ENCODE measurements at regions of chr6 and their contacts with region 1.

Region 1: GRCh38 chr6:128807577-128807976 is 75.4 kb upstream of the LAMA2 start:
- DNase-seq: no peak
- H3K4me3 ChIP-seq: no peak overlapping the region
- H3K27ac ChIP-seq: no peak overlapping the region
- H3K4me1 ChIP-seq: peaks cover 11% of the 10 kb centered on the region
- H3K27me3 ChIP-seq: no peaks in the 10 kb centered on the region
- CTCF ChIP-seq: peak; percentile 62

Region 2: GRCh38 chr6:129251669-129252376 is 444.2 kb after region 1 on chr6:
- intact Hi-C with region 1: loop called (anchors 5 kb)
- DNase-seq: no peak
- H3K4me3 ChIP-seq: no peak overlapping the region
- H3K27ac ChIP-seq: peak overlapping the region; percentile 34
- H3K4me1 ChIP-seq: peaks cover 58% of the 10 kb centered on the region
- H3K27me3 ChIP-seq: no peaks in the 10 kb centered on the region
- CTCF ChIP-seq: peak; percentile 82

Measured in left ventricle myocardium inferior (tissue), 1 donor.